ENCODE measurements at regions of chr17 and their contacts with region 1.

Region 1: GRCh38 chr17:36629252-36629847 is 28.0 kb downstream of the MRM1 start:
- DNase-seq: peak; percentile 87
- ATAC-seq: peak; percentile 92
- H3K4me3 Mint-ChIP-seq: no peak overlapping the region
- H3K27ac Mint-ChIP-seq: no peak overlapping the region
- H3K4me1 Mint-ChIP-seq: no peaks in the 10 kb centered on the region
- H3K27me3 Mint-ChIP-seq: peaks cover 4% of the 10 kb centered on the region

Region 2: DNA sequence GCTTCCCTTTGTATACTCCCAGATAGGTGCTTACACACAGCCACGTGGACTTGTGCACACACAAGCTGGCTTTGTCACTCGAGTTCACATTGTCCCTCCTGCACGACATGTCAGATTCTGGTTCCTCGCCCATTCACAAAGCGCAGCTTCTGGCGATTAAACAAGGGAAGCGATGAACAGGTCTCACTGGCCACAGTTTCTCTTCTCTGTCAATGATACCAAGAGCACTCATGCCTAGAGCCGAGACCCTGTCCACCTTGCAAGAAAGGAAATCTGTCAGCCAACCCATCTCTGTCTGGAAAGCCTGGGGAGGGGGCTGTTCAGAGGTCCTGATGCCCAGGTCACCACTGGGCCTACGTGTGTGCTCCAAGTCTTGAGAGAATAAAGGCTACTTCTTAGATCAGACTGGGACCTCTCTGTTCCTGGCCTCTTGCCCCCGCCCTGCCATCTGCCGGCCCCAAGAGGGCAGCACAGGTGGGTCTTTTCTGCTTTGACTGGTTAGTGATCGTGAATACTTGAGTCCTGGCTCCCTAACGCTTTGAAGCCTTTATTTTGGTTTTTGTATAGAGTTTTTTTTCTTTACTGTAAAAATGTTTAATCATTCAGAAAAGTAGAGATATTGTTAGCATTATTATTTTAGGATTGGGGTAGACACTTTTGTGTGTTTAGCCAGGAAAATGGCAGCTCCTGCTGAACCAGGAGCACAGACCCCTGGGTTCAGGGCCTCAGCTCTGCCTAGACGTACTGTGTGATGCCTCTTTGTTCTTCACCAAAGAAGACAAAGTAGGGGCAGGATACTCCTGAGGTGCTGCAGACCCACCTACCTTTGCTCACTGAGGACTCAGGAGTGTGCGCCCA is 76.8 kb after region 1 on chr17:
- CTCF ChIA-PET with region 1: interaction called, 3 read pairs
- POLR2A ChIA-PET with region 1: no interaction called
- intact Hi-C with region 1: loop called (anchors 1 to 5 kb)
- DNase-seq: peak; percentile 78
- ATAC-seq: peak; percentile 92
- H3K4me3 Mint-ChIP-seq: no peak overlapping the region
- H3K27ac Mint-ChIP-seq: no peak overlapping the region
- H3K4me1 Mint-ChIP-seq: no peaks in the 10 kb centered on the region
- H3K27me3 Mint-ChIP-seq: peaks cover 26% of the 10 kb centered on the region

Region 3: GRCh38 chr17:36937966-36938565 is 308.7 kb after region 1 on chr17:
- CTCF ChIA-PET with region 1: no interaction called
- POLR2A ChIA-PET with region 1: no interaction called
- intact Hi-C with region 1: loop called in 1 of 2 experiments (anchors 5 kb)
- DNase-seq: peak; percentile 60
- ATAC-seq: peak; percentile 44
- H3K4me3 Mint-ChIP-seq: peak overlapping the region; percentile 60
- H3K27ac Mint-ChIP-seq: peak overlapping the region; percentile 60
- H3K4me1 Mint-ChIP-seq: peaks cover 65% of the 10 kb centered on the region
- H3K27me3 Mint-ChIP-seq: peaks cover 75% of the 10 kb centered on the region

Region 4: GRCh38 chr17:37220607-37220953 is 591.2 kb after region 1 on chr17:
- CTCF ChIA-PET with region 1: interaction called, 4 read pairs
- POLR2A ChIA-PET with region 1: no interaction called
- intact Hi-C with region 1: loop called in 1 of 2 experiments (anchors 5 kb)
- DNase-seq: peak; percentile 38
- ATAC-seq: no peak
- H3K4me3 Mint-ChIP-seq: no peak overlapping the region
- H3K27ac Mint-ChIP-seq: no peak overlapping the region
- H3K4me1 Mint-ChIP-seq: no peaks in the 10 kb centered on the region
- H3K27me3 Mint-ChIP-seq: no peaks in the 10 kb centered on the region

Region 5: GRCh38 chr17:37373530-37374159 is 744.3 kb after region 1 on chr17:
- CTCF ChIA-PET with region 1: interaction called, 4 read pairs
- POLR2A ChIA-PET with region 1: no interaction called
- intact Hi-C with region 1: loop called in 1 of 2 experiments (anchors 1 kb)
- DNase-seq: peak; percentile 82
- ATAC-seq: peak; percentile 98
- H3K4me3 Mint-ChIP-seq: no peak overlapping the region
- H3K27ac Mint-ChIP-seq: no peak overlapping the region
- H3K4me1 Mint-ChIP-seq: peaks cover 5% of the 10 kb centered on the region
- H3K27me3 Mint-ChIP-seq: no peaks in the 10 kb centered on the region